Lower lobe of right lung (tissue), 2 donors: ENCODE measurements at regions of chr3 and their contacts with region 1.

Region 1: DNA sequence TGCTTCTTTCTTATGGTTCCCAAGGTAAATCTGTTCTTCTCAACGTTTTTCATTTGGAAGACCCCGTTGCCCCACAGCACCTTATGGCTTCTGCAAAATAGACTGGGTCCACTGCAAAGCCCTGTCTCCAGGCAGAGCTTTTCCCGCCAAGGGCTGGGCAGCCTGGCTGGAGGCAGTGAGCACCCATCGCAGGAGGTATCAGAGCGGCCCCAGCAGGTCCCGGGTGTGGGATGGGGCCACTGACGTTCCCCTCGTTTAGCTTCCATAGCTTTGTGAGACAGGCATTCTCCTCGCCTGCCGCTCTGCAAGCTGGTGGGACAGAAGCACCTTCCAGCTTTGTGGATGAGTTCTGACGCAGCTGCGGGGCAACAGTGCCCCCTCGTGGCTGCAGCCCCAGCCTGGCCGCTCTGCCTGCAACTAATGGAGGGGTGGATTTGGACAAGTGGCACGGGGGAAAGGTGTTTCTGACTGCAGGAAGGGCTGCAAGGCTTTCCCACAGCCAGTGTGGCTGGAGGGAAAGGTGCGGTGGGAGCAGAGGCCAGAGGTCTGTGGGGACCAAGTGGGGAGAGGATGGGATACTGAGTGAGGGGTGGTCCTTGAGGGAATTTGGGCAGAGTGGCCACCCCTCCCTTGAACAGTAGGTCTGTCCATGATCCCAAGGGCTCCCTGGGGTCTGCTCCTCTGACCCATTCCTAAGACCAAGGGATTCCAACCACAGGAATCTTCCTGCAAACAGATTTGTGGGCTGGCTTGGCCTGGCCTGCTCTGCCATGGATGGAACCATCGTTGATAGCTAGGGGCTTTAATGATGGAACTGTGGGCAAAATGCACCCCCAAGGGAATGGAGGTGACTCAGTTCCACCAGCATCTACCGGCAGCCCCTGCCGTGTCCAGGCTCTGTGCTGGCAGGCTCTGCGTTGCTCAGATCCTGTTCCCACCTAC is 99.4 kb downstream of the FBLN2 start:
- DNase-seq: peak; percentile 79
- ATAC-seq: peak; percentile 75 to 83
- H3K4me3 ChIP-seq: no peak overlapping the region
- H3K27ac ChIP-seq: no peak overlapping the region
- H3K4me1 ChIP-seq: peaks cover 16% of the 10 kb centered on the region
- H3K27me3 ChIP-seq: peaks cover 10% of the 10 kb centered on the region
- CTCF ChIP-seq: peak; percentile 97

Region 2: DNA sequence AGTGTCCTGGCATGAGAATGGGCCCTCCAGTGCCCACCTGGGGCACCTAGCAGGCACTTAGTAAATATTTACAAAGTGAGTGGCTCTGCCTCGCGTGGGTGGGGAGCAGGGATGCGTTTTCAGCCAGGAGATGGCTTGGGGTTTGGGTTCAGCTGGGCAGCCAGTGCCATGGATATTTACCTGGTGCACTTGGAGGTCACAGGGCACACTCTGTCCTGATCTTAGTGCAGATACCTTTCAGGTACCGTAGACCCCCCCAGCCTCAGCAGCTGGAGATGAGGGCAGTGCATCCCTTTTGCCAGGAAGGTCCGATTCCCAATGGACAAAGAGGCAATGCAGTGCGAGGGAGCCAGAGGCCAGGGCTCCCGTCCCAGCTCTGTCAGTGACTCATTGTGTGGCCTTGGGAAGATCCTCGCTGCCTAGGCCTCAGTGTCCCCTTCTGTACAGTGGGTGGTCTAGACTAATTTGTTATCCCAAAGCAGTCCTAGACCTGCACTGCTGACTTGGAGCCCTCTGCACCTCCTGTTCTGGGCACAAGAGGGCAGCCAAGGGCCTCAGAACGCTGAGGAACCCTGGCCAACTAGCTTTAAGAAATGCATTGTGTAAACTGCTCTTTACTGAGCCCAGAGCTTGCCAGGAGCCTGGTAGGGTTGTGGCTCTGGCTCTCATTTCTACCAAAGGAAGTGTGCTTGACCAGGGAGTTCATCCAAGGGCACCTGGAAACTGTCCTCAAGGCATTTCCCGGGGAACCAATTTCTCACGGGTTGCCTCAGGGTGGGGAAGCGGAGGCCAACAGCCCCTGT is 152.2 kb before region 1 on chr3:
- intact Hi-C with region 1: loop called (anchors 5 kb)
- DNase-seq: peak; percentile 77
- ATAC-seq: peak; percentile 91 to 94
- H3K4me3 ChIP-seq: no peak overlapping the region
- H3K27ac ChIP-seq: no peak overlapping the region
- H3K4me1 ChIP-seq: peaks cover 10% of the 10 kb centered on the region
- H3K27me3 ChIP-seq: no peaks in the 10 kb centered on the region
- CTCF ChIP-seq: peak; percentile 91

Region 3: DNA sequence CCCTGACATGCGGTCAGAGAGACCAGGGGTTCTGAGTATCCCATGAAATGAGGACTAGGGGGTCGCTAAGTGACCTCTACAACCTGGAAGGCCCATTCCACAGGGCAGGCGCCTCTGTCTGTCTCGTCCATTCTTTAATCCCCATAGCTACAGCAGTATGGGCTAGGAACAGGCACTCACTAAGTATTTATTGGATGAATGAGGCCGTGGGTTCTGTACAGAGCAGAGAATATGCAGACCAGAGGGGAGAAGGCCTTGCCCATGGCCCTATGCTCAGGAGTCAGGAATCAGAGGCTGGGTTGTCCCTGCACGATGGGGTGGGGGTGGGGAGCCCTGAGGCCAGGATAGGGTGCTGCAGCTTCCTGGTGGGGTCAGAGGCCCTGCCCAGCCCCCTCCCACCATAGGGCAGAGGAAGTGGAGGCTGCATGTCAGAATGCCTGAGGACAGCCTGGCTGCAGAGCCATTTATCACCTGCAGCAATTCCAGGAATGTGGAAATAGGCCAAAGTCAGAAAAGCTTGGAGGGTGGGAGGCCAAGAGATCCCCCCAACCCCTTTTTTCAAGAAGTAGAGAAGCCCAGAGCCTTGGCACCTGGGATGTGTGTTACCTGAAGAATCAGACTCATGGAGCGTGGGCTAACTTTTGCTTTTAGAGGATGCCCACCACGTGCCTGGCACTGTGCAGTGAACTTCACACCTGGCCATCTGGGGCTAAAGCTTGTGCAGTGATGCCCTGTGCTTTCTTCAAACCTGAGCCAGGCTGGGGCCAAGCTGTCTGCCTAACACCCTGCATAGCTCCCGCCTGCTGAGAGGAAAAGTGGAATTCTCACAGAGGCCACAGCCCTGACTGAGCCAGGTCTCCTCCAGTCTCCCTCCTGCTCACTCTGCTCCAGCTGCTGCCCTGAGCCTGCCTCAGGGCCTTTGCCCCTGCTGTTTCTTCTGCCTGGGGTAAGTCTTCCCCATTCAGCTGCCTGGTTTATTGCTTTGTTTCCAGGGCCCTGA is 122.1 kb after region 1 on chr3:
- intact Hi-C with region 1: no loop called
- DNase-seq: no peak
- ATAC-seq: no peak
- H3K4me3 ChIP-seq: no peak overlapping the region
- H3K27ac ChIP-seq: no peak overlapping the region
- H3K4me1 ChIP-seq: no peaks in the 10 kb centered on the region
- H3K27me3 ChIP-seq: no peaks in the 10 kb centered on the region
- CTCF ChIP-seq: no peak

Region 4: GRCh38 chr3:13884851-13885703 is 236.7 kb after region 1 on chr3:
- intact Hi-C with region 1: loop called (anchors 10 kb)
- DNase-seq: no peak
- ATAC-seq: peak; percentile 65 to 67
- H3K4me3 ChIP-seq: no peak overlapping the region
- H3K27ac ChIP-seq: no peak overlapping the region
- H3K4me1 ChIP-seq: peaks cover 8% of the 10 kb centered on the region
- H3K27me3 ChIP-seq: peaks cover 21% of the 10 kb centered on the region
- CTCF ChIP-seq: peak; percentile 67